GM10248 (cell line): ENCODE measurements at regions of chr17 and their contacts with region 1.

Region 1: DNA sequence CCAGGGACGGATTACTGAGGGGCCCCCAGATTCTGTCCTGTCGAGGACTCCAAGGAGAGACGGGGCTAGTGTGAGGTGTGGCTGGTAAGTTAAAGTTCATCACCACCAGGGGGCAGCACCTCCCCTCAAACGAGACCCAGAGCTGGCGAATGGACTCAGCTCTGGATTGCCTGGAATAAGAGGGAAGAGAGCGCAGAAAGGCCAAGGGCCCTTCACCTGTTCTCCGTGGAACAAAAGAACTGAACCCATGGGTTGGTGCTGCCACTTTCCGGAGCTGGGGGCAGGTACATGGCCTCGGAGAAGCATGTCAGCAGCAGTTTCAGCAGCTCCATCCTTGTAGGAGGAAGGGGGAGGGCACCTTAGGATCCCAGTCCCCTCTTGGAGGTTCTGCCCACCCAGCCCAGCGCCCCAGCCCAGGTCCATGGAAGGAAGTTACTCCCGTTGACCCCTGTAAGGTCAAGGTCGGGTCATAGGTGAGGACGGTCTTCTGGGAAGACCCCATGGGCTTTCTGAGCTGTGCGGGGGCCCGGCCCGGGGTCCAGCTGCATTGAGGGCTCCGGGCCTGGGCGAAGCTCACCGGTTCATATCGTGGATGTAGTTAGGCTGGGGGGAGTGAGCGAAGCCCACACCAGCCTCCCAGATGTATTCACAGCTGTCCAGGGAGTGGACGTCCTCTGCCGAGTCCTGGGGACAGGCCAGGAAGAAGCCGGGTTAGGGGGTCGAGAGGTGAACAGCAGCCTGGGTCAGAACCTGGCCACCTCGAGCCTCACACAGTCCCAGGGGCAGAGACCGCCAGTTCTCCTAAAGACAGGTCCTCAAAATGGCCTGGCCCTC is 10.7 kb downstream of the HID1 start:
- DNase-seq: peak; percentile 87
- CTCF ChIP-seq: peak; percentile 74

Region 2: DNA sequence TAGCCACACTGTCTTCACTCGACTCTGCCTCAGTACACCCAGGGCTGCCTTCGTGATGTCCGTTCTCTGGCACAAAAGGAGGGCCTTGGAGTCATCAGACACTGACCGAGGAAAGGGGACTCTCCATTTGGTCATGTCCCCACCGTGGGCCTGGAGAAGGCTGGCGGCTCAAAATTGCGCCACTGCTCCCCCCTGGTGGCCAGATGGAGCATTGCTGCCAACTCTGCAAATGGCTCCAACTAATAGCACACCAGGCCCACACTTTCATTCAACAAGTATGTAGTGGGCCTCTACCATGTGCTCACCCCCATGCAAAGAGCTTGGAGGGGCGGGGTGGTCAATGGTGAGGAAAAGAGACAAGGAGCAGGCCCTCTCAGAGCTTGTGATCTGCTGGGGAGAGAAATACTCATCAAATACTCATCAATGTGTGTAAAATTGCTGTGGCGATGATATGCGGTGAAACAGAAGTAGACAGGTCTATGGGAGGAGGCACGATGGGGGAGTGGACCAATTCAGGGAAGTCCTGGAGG is 96.9 kb before region 1 on chr17:
- CTCF ChIA-PET with region 1: interaction called, 13 read pairs
- POLR2A ChIA-PET with region 1: no interaction called
- DNase-seq: peak; percentile 85
- CTCF ChIP-seq: peak; percentile 93

Region 3: GRCh38 chr17:74935585-74936469 is 26.0 kb before region 1 on chr17 and contains the start of gene OTOP3:
- CTCF ChIA-PET with region 1: interaction called, 390 read pairs
- POLR2A ChIA-PET with region 1: no interaction called
- DNase-seq: no peak
- CTCF ChIP-seq: no peak

Region 4: GRCh38 chr17:74987418-74987908 is 25.6 kb after region 1 on chr17 and contains the start of gene CDR2L:
- CTCF ChIA-PET with region 1: interaction called, 47 read pairs
- POLR2A ChIA-PET with region 1: no interaction called
- DNase-seq: peak; percentile 94
- CTCF ChIP-seq: no peak

Region 5: DNA sequence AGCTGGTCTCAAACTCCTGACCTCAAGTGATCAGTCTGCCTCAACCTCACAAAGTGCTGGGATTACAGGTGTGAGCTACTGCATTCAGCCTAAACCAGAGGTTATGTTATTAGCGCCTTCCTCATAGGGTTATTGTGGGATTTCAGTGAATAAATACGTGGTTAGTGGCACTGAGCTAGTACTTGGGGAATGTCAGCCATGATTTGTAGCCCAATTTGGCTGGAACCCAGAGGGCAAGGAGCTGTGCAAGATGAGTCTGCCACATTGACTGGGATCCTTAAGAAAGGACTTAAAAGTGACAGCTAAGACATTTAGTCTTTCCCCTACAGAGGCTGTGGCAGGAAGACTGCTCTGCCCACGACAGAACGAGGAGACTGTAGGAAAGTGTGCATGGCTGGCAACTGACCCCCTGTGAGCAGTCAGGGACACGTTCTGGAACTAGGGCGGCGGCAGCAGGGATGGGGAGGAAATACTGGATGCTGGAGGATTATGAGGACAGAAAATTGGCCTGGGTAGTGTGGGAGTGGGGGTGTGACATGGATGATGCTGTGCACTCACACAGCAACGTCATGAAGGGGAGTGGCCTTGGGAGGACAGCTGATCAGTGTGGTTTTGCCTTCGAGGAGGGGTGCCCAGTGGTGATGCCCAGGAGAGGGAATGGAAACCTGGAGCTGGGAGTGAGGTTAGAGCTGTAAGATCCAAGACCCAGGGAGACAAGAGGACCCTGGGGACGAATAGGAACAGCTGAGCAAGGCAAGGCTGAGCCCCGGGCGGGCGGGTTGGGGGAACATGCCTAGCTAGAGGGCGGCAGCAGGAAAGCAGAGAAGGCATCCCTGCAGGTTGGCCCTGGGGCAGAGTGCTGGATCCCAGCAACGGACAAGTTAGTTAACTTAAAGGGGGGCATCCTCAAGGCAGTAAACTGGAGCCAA is 70.4 kb after region 1 on chr17:
- CTCF ChIA-PET with region 1: interaction called, 12 read pairs
- POLR2A ChIA-PET with region 1: no interaction called
- DNase-seq: peak; percentile 77
- CTCF ChIP-seq: no peak

Region 6: GRCh38 chr17:75199886-75200618 is 238.2 kb after region 1 on chr17:
- CTCF ChIA-PET with region 1: interaction called, 114 read pairs
- POLR2A ChIA-PET with region 1: no interaction called
- DNase-seq: no peak
- CTCF ChIP-seq: no peak